ENCODE measurements at regions of chr20 and their contacts with region 1.

Region 1: GRCh38 chr20:33915726-33916331 is 77.9 kb upstream of the RALY start:
- DNase-seq: peak; percentile 76
- ATAC-seq: peak; percentile 66
- H3K4me3 Mint-ChIP-seq: no peak overlapping the region
- H3K27ac Mint-ChIP-seq: no peak overlapping the region
- H3K4me1 Mint-ChIP-seq: peaks cover 15% of the 10 kb centered on the region
- H3K27me3 Mint-ChIP-seq: no peaks in the 10 kb centered on the region

Region 2: DNA sequence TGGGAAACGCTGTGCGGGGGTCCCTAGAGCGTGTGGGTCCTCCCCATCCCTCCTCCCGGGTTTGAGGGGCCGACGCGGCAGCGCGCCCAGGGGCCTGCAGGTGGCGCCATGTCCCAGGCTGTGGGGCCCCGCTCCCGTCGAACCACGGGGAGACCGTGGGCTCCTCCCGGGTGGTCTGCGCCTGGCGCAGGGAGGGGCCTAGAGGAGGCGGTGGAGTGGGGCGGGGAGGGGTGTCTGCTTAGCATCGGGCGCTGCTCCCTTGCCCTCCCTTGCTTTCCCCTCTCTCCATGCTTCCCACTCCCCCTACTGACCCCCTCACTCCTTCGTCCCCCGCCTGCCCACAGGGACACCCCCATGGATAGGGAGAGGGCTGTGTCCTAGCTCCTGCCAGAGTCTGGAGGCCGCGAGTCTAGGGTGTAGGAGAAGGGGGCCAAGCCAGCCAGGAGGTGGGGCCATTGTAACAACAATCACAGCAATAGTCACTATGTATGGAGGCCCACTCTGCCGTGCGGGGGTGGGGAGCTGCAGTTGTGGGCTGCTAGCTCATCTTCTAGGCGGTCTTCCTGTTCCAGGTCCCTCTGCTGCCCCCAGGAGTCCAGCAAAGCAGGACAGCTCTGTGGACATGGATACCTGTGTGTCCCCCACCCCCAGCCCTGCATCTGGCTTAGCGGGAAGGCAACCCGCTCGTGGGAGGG is 53.0 kb before region 1 on chr20:
- CTCF ChIA-PET with region 1: interaction called, 5 read pairs
- POLR2A ChIA-PET with region 1: interaction called, 4 read pairs
- intact Hi-C with region 1: loop called in 1 of 2 experiments (anchors 1 kb)
- DNase-seq: peak; percentile 69
- ATAC-seq: peak; percentile 60
- H3K4me3 Mint-ChIP-seq: no peak overlapping the region
- H3K27ac Mint-ChIP-seq: no peak overlapping the region
- H3K4me1 Mint-ChIP-seq: peaks cover 20% of the 10 kb centered on the region
- H3K27me3 Mint-ChIP-seq: no peaks in the 10 kb centered on the region

Region 3: GRCh38 chr20:33897313-33897912 is 18.4 kb before region 1 on chr20:
- CTCF ChIA-PET with region 1: interaction called, 12 read pairs
- POLR2A ChIA-PET with region 1: no interaction called
- intact Hi-C with region 1: no loop called
- DNase-seq: peak; percentile 29
- ATAC-seq: no peak
- H3K4me3 Mint-ChIP-seq: no peak overlapping the region
- H3K27ac Mint-ChIP-seq: no peak overlapping the region
- H3K4me1 Mint-ChIP-seq: no peaks in the 10 kb centered on the region
- H3K27me3 Mint-ChIP-seq: peaks cover 7% of the 10 kb centered on the region

Region 4: GRCh38 chr20:33933469-33933909 is 17.7 kb after region 1 on chr20:
- CTCF ChIA-PET with region 1: interaction called, 12 read pairs
- POLR2A ChIA-PET with region 1: no interaction called
- intact Hi-C with region 1: no loop called
- DNase-seq: peak; percentile 78
- ATAC-seq: peak; percentile 96
- H3K4me3 Mint-ChIP-seq: no peak overlapping the region
- H3K27ac Mint-ChIP-seq: no peak overlapping the region
- H3K4me1 Mint-ChIP-seq: no peaks in the 10 kb centered on the region
- H3K27me3 Mint-ChIP-seq: no peaks in the 10 kb centered on the region

Region 5: DNA sequence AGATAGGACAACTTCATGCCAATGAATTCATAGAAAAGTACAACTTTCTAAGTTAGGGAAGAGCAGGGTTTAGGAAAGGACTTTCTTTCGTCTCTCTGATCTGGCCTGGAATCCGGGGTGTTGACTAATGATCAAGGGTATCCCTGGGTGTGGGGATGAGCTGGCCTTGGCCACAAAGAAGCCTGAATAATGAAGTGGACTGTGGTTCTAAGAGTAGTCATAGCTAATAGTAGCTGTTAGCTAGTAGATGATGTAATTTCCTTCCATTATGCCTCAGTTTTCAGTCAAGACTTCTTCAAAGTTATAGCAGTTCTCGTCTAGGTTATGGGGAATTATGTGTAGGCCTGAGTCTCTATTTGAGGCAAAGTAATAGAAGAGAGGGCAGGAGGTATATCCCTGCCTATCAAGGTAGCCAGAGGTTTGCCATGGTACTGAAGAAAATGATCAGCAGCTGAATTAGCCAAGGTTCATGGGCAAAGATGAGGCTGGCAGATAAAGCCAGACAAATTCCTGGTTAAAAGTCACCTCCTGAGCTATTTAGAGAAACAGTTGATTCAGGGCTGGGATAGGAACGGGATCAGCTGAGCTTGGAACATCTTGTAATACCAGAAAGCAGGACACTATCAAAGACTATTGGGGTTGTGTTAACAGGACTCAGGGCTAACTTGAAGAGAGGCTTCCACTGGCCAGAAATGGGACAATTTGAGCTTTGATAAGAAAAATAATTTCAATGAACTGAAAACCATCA is 1195.5 kb after region 1 on chr20:
- CTCF ChIA-PET with region 1: no interaction called
- POLR2A ChIA-PET with region 1: no interaction called
- intact Hi-C with region 1: no loop called
- DNase-seq: no peak
- ATAC-seq: no peak
- H3K4me3 Mint-ChIP-seq: no peak overlapping the region
- H3K27ac Mint-ChIP-seq: peak overlapping the region; percentile 17
- H3K4me1 Mint-ChIP-seq: peaks cover 6% of the 10 kb centered on the region
- H3K27me3 Mint-ChIP-seq: no peaks in the 10 kb centered on the region